Activated T-helper 1 cell treated with anti-CD3 and anti-CD28 coated beads, Interleukin-12 subunit alpha, Interleukin-12 subunit beta, Interleukin-2, Interleukin-4 antibody, amounts not matched to agents 30 ng/mL and 10 ng/mL and 1 ng/mL, durations not matched to agents 14 hours and 24 hours and 36 hours (primary cell): ENCODE measurements at regions of chr11 and their contacts with region 1.

Region 1: DNA sequence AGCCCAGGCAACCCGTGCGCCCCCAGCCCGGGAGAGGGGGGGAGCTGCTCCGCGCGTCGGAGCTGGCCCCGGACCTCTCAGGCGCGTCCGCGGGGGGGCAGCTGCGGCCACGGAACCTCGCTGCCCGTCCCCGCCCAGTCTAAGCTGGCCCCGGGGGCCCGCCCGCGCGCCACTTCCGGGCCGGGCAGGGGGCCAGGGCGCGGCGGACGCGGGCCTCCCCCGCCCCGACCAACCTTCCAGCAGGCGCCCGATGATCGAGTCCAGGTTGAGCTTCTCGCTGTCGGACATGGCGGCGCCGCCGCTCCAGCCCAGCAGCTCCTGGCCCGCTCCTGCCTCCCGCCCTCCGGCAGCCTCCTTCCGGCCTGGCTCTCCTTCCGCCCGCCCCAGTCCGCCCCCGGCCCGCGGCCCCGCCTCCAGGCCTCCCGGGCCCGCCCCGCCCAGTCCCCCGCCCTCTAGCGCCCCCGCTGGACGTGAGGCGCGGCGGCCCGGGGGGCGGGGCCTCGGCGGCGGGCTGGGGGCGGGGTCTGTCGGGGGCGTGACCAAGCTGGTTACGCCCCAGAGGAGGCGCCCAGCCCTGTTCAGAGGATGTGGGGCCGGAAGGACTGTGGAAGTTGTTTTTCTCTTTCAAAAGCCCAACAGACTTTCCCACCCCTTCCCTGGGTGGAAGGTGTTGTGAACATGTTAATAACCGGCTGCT is at the start of gene PPP1CA:
- DNase-seq: peak; percentile 87
- H3K4me3 Mint-ChIP-seq: peak within 1 kb of the TSS; percentile 92
- H3K27ac Mint-ChIP-seq: peak within 1 kb of the TSS; percentile 86
- H3K4me1 Mint-ChIP-seq: peaks cover 50% of the 10 kb centered on the region
- H3K27me3 Mint-ChIP-seq: no peaks in the 10 kb centered on the region
- total RNA-seq, gene PPP1CA: 260 and 263 TPM in 2 replicates

Region 2: GRCh38 chr11:67265633-67266423 is 135.8 kb before region 1 on chr11:
- intact Hi-C with region 1: loop called (anchors 5 kb)
- DNase-seq: peak; percentile 76
- H3K4me3 Mint-ChIP-seq: peak overlapping the region; percentile 83
- H3K27ac Mint-ChIP-seq: peak overlapping the region; percentile 90
- H3K4me1 Mint-ChIP-seq: peaks cover 73% of the 10 kb centered on the region
- H3K27me3 Mint-ChIP-seq: no peaks in the 10 kb centered on the region

Region 3: DNA sequence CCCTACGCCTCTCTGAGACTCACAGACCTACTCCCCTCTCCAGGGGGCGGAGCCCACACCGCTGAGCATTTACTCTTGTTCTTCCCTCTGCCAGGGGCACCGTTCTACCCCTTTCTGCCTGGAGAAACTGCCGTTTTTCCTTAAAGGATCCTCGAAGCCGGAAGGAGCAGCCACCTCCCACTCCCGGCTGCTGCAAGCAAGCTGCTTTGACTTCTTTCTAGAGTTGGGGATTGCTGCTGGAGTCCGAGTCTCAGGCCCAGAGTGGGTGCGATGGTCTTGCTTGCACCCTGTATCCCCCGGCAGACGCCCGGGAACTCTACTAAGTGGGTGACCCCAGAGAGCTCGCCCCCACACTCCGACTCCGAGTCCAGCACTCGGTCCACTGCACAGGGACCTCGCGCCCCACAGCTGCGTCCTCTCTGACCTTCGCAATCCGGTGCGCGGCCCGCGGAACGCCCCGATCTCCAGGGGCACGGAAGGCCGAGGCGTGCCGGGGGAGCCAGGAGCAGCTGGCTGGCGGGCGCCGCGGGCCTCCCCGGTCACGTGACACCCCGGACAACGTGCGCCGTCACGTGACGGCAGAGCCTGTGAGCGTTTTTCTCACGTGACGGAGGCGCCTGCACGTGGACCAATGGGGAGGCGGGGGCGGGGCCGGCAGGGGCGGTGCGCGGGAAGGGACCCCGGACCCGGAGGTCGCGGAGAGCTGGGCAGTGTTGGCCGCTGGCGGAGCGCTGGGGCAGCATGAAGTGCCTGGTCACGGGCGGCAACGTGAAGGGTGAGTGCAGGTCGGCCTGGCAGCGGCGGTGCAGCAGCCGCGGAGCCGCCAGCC is 10.1 kb before region 1 on chr11 and contains the start of gene RAD9A:
- intact Hi-C with region 1: loop called (anchors 1 kb)
- DNase-seq: peak; percentile 89
- H3K4me3 Mint-ChIP-seq: peak within 1 kb of the TSS; percentile 90
- H3K27ac Mint-ChIP-seq: peak within 1 kb of the TSS; percentile 67
- H3K4me1 Mint-ChIP-seq: peaks cover 35% of the 10 kb centered on the region
- H3K27me3 Mint-ChIP-seq: peaks cover 4% of the 10 kb centered on the region
- total RNA-seq, gene RAD9A: 30.7 and 31.6 TPM in 2 replicates

Region 4: GRCh38 chr11:67420646-67421420 is 19.2 kb after region 1 on chr11:
- intact Hi-C with region 1: loop called (anchors 1 kb)
- DNase-seq: peak; percentile 95
- H3K4me3 Mint-ChIP-seq: peak overlapping the region; percentile 72
- H3K27ac Mint-ChIP-seq: peak overlapping the region; percentile 70
- H3K4me1 Mint-ChIP-seq: peaks cover 30% of the 10 kb centered on the region
- H3K27me3 Mint-ChIP-seq: peaks cover 11% of the 10 kb centered on the region

Region 5: DNA sequence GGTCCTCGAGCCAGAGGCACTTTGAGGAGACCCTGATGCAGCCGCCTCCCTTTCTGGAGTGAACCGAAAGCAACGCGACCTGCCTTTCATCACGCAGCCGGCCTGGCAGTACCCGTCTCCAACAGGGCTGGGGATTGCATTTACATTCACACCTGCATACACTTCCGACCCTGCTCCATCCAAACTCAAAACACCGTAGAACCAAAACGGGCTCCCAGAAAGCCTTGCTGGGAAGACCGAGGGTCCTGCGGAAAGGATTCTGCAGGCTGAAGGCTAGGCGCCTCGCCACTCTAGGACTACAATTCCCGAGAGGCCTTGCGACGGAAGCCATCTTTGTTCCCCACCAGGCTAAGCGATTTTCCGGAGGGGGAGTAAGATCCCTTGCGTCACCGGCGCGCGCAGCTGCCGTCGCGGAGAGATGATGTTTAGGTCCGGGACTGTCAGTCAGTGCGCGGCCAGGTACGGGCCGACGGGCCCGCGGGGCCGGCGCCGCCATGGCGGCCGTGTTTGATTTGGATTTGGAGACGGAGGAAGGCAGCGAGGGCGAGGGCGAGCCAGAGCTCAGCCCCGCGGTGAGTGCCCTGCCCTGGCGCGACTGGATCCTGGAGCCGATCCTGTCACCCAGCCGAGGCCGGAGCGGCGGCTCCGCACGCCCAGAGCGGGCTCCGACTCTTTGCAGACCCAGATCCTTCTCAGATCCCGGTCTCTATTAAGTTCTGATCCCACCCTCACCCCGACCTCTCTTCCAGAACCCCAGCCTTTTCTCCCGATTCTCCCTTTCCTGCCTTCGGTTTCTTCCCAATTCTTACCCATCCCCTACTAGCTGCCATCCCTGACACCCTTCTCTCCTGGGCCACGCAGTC is 26.6 kb after region 1 on chr11 and contains the start of gene RPS6KB2:
- intact Hi-C with region 1: loop called (anchors 1 kb)
- DNase-seq: peak; percentile 98
- H3K4me3 Mint-ChIP-seq: peak within 1 kb of the TSS; percentile 98
- H3K27ac Mint-ChIP-seq: peak within 1 kb of the TSS; percentile 97
- H3K4me1 Mint-ChIP-seq: peaks cover 27% of the 10 kb centered on the region
- H3K27me3 Mint-ChIP-seq: no peaks in the 10 kb centered on the region
- total RNA-seq, gene RPS6KB2: 84.1 and 86.2 TPM in 2 replicates

Region 6: GRCh38 chr11:67468835-67469811 is 67.5 kb after region 1 on chr11 and contains the start of gene TMEM134:
- intact Hi-C with region 1: loop called (anchors 1 kb)
- DNase-seq: peak; percentile 88
- H3K4me3 Mint-ChIP-seq: peak within 1 kb of the TSS; percentile 91
- H3K27ac Mint-ChIP-seq: peak within 1 kb of the TSS; percentile 84
- H3K4me1 Mint-ChIP-seq: peaks cover 21% of the 10 kb centered on the region
- H3K27me3 Mint-ChIP-seq: no peaks in the 10 kb centered on the region
- total RNA-seq, gene TMEM134: 55.1 and 61.4 TPM in 2 replicates

Region 7: GRCh38 chr11:67606492-67607201 is 205.0 kb after region 1 on chr11 and contains the start of gene NDUFV1:
- intact Hi-C with region 1: loop called (anchors 10 kb)
- DNase-seq: peak; percentile 97
- H3K4me3 Mint-ChIP-seq: peak within 1 kb of the TSS; percentile 94
- H3K27ac Mint-ChIP-seq: peak within 1 kb of the TSS; percentile 97
- H3K4me1 Mint-ChIP-seq: peaks cover 26% of the 10 kb centered on the region
- H3K27me3 Mint-ChIP-seq: peaks cover 7% of the 10 kb centered on the region
- total RNA-seq, gene NDUFV1: 289 and 303 TPM in 2 replicates